ENCODE measurements at regions of chr1 and their contacts with region 1.

Region 1: GRCh38 chr1:25503551-25504426 is 39.6 kb upstream of the LDLRAP1 start:
- DNase-seq: peak; percentile 83
- ATAC-seq: peak; percentile 87
- H3K4me3 Mint-ChIP-seq: no peak overlapping the region
- H3K27ac Mint-ChIP-seq: peak overlapping the region; percentile 81
- H3K4me1 Mint-ChIP-seq: peaks cover 46% of the 10 kb centered on the region
- H3K27me3 Mint-ChIP-seq: no peaks in the 10 kb centered on the region
- CTCF ChIP-seq: peak; percentile 21; the same call in 1 of the 2 replicates

Region 2: DNA sequence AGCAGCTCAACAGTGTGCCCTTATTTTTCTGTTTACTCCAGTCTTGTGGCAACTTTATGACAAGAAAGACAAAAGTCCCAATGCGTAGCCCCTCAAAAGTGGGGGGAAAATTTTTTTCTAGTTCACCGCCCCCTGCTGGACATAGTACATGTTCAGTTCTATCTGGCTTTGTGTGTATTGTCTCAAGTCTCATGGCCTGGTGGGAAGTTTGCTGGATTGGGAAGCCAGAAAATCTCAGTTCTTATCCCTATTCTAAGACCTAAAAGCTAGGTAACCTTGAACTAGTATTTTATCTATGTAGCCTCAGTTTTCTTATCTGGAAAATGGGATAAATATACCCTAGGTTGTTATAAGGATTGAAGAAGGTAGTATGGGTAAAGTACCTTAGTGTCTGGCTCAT is 16.2 kb before region 1 on chr1:
- CTCF ChIA-PET with region 1: interaction called, 18 read pairs
- POLR2A ChIA-PET with region 1: no interaction called
- DNase-seq: no peak
- ATAC-seq: no peak
- H3K4me3 Mint-ChIP-seq: no peak overlapping the region
- H3K27ac Mint-ChIP-seq: no peak overlapping the region
- H3K4me1 Mint-ChIP-seq: peaks cover 41% of the 10 kb centered on the region
- H3K27me3 Mint-ChIP-seq: no peaks in the 10 kb centered on the region
- CTCF ChIP-seq: peak; percentile 49

Region 3: DNA sequence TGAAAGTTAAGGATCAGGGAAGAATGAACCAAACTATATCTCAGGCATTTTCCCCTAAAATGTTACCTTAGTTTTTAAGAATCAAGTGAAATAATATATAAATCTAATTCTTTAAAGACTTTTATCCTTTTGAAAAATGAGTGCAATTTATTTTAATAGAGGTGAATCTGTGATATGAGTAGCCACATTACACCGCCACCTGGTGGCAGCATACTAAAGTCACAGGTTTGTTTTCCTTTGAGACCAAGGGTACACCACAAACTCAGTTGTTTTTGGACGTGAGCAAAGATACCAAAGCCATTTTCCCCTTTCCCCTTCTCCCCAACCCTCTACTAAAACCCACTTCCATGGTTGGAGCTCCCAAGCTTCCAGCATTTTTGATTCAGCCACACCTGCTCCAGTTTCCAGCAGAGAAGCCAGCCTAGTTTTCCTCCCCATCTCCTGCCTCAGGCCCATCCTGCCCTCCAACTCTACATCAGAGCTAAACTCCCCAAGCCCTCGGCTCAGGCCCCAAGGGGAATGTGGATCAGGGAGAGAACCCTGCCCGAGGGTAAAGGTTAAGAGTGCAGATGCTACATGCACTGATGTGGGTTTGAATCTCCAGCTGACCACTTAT is 16.8 kb after region 1 on chr1:
- CTCF ChIA-PET with region 1: interaction called, 175 read pairs
- POLR2A ChIA-PET with region 1: interaction called, 5 read pairs
- DNase-seq: peak; percentile 66
- ATAC-seq: no peak
- H3K4me3 Mint-ChIP-seq: no peak overlapping the region
- H3K27ac Mint-ChIP-seq: peak overlapping the region; percentile 76; the same call in 1 of the 2 replicates
- H3K4me1 Mint-ChIP-seq: peaks cover 23% of the 10 kb centered on the region
- H3K27me3 Mint-ChIP-seq: no peaks in the 10 kb centered on the region; the same call in 1 of the 2 replicates
- CTCF ChIP-seq: peak; percentile 65